ENCODE measurements at regions of chr2 and their contacts with region 1.

Region 1: DNA sequence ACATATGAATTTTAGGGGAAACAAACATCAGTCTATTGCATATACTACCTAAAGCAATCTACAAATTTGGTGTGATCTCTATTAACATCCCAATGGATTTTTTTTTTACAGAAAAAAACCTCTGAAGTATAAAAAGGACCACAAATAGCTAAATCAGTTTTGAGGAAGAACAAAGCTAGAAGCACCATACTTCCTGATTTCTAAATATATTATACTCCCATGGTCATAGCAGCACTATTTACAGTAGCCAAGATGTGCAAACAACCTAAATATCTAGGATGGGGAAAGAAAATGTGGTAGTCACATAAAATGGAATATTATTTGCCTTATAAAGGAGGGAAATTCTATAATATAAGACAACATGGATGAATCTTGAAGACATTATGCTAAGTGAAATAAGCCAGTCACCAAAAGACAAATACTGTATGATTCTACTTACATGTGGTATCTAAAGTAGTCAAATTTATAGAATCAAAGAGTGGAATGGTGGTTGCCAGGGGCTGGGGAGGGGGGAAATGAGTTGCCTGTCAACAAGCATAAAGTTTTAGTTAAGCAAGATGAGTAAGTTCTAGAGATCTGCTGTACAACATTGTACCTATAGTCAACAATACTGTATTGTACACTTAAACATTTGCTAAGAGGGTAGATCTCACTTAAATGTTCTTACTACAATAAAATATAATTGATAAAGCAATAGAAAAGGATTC is 17.6 kb upstream of the CASP8 start:
- ATAC-seq: no peak
- H3K4me3 ChIP-seq: no peak overlapping the region
- H3K27ac ChIP-seq: no peak overlapping the region
- H3K4me1 ChIP-seq: no peaks in the 10 kb centered on the region

Region 2: DNA sequence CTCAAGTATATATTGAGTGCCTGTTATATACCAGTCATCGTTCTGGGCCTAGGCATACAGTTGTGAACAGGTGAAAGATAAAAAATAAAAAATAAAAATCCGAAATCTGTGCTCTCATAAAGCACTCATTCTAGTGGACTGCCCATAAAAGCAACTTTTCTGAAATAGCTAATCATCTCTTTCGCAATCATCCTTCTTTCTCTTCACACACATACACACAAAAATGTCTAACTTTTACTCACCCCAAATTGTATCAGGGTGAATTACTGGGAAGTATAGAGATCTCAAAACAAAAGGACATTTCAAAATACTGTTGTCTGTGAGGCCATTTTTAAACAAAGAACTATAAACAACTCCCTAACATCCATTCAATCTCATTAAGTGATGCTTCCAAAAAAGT is 249.6 kb before region 1 on chr2:
- in situ Hi-C with region 1: no loop called
- ATAC-seq: no peak
- H3K4me3 ChIP-seq: no peak overlapping the region
- H3K27ac ChIP-seq: no peak overlapping the region
- H3K4me1 ChIP-seq: no peaks in the 10 kb centered on the region

Region 3: GRCh38 chr2:201363857-201364560 is 121.3 kb after region 1 on chr2:
- in situ Hi-C with region 1: loop called in 1 of 9 experiments (anchors 10 kb)
- ATAC-seq: peak in 4 of 8 experiments; percentile 57 to 81 (median 68)
- H3K4me3 ChIP-seq: no peak overlapping the region
- H3K27ac ChIP-seq: no peak overlapping the region
- H3K4me1 ChIP-seq: no peaks in the 10 kb centered on the region